Ovary (tissue), 10 donors: ENCODE measurements at regions of chr2 and their contacts with region 1.

Region 1: DNA sequence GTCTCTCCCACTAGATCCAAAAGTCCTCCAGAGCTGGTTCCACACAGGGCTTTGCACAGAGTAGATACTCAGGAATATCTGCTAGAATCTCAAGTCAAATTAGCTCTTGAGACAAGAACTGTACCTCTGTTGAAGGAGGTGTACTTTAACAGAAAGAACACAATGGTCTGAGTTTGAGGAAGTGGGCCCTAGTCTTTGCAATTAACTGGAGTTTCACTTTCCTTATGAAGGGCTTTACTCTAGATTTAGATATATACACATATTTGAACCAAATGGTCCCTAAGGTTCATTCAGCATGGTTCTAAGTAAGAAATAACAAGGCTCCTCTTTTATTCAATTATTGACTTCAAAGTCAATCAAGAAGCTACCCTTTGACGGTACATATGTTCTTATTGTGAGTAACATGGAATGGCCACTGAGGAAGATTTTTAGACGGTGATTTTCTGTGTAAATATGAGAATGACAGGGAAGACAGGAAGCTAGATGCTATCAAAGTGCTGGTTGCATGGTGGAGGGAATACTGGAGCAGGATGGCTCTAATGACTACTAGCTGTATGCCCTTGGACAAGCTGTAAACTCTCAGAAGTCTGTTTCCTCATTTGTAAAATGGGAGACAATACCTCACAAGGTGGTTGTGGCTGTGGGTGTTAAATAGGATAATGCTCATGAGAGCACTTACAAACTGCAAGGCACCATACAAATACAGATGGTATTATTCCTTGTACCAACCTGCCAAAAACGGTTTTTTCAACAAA is 73.5 kb upstream of the SERTAD2 start:
- DNase-seq: no peak
- H3K4me3 ChIP-seq: no peak overlapping the region
- H3K27ac ChIP-seq: no peak overlapping the region
- H3K4me1 ChIP-seq: peaks cover 2% of the 10 kb centered on the region
- H3K27me3 ChIP-seq: no peaks in the 10 kb centered on the region
- CTCF ChIP-seq: no peak
- EP300 ChIP-seq: no peak
- POLR2A ChIP-seq: no peak

Region 2: DNA sequence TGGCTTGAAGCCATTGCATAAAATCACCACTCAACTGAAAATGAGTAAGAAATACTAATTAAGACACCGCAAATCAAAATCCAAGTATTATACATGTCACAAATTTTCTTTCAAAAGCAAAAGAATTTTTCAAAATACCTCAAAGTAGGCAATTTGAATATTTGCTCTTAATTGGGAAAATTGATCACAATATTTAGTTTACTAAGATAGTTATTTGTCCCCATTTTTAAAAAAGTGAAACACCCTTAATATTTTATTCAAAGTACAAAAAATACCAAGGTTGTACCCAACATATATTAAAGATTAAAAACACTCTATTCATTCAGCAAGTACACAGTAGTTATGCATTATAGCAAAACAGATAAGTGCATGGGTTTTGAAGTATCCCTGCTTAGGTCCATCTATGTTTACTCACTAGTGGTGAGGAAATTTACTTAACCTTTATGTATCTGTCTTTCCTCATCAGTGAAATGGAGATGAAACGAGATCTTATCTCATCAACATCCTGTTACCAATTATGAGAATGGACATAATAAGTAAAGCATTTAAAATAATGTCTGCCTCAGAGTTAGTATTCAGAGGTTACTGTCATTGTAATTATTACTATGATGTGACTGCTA is 743.1 kb before region 1 on chr2:
- intact Hi-C with region 1: no loop called
- DNase-seq: no peak
- H3K4me3 ChIP-seq: no peak overlapping the region
- H3K27ac ChIP-seq: no peak overlapping the region
- H3K4me1 ChIP-seq: peaks cover 3% of the 10 kb centered on the region
- H3K27me3 ChIP-seq: no peaks in the 10 kb centered on the region
- CTCF ChIP-seq: no peak
- EP300 ChIP-seq: no peak
- POLR2A ChIP-seq: no peak

Region 3: GRCh38 chr2:64666810-64667438 is 60.3 kb before region 1 on chr2:
- intact Hi-C with region 1: loop called in 1 of 4 experiments (anchors 10 kb)
- DNase-seq: no peak
- H3K4me3 ChIP-seq: no peak overlapping the region
- H3K27ac ChIP-seq: peak overlapping the region in 1 of 2 donors; percentile 27
- H3K4me1 ChIP-seq: peaks cover 3% of the 10 kb centered on the region
- H3K27me3 ChIP-seq: no peaks in the 10 kb centered on the region
- CTCF ChIP-seq: no peak
- EP300 ChIP-seq: no peak
- POLR2A ChIP-seq: no peak